Activated naive CD4-positive, alpha-beta T cell treated with anti-CD3 and anti-CD28 coated beads for 36 hours (primary cell): ENCODE measurements at regions of chr2 and their contacts with region 1.

Region 1: DNA sequence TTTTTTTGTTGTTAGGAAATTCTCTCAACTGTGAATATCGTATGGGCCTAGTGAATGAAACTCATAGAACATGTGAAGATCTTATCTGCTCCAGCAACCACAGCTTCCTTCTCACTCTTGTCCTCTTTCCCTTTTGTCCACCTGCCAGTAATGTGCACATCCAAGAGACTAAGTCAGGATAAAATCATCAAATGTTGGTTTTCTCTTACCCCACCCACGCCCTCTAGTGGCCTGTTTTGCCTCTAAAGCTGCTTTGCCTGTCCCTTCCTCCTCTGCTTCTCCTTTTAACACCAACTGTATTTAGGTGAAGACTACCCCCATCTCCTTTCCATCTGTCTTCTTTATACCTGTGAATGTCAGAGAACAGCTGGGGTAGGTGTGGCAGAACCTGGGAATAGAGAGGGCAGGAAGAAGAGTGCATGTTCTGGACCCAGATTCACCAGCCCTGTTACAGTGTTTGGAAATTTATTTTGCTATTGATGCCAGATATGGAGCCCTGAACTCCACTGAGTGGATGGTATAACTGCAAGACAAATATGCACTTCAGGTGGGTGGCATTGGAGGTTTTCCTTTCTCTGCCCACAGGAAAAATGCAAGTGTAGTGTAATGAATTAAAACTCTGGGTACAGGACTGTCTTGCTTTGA is 8.4 kb upstream of the MGAT5 start:
- DNase-seq: peak; percentile 90
- H3K4me3 Mint-ChIP-seq: no peak overlapping the region
- H3K27ac Mint-ChIP-seq: no peak overlapping the region
- H3K4me1 Mint-ChIP-seq: peaks cover 68% of the 10 kb centered on the region
- H3K27me3 Mint-ChIP-seq: no peaks in the 10 kb centered on the region

Region 2: GRCh38 chr2:133753665-133754064 is 491.8 kb before region 1 on chr2:
- CTCF ChIA-PET with region 1: no interaction called
- intact Hi-C with region 1: no loop called
- DNase-seq: no peak
- H3K4me3 Mint-ChIP-seq: no peak overlapping the region
- H3K27ac Mint-ChIP-seq: no peak overlapping the region
- H3K4me1 Mint-ChIP-seq: no peaks in the 10 kb centered on the region
- H3K27me3 Mint-ChIP-seq: peaks cover 7% of the 10 kb centered on the region

Region 3: GRCh38 chr2:133886735-133887660 is 358.5 kb before region 1 on chr2:
- CTCF ChIA-PET with region 1: no interaction called
- intact Hi-C with region 1: loop called (anchors 2 kb)
- DNase-seq: peak; percentile 66
- H3K4me3 Mint-ChIP-seq: no peak overlapping the region
- H3K27ac Mint-ChIP-seq: no peak overlapping the region
- H3K4me1 Mint-ChIP-seq: no peaks in the 10 kb centered on the region
- H3K27me3 Mint-ChIP-seq: peaks cover 5% of the 10 kb centered on the region

Region 4: GRCh38 chr2:134127496-134127895 is 118.0 kb before region 1 on chr2:
- CTCF ChIA-PET with region 1: interaction called, 11 read pairs
- intact Hi-C with region 1: no loop called
- DNase-seq: peak; percentile 84
- H3K4me3 Mint-ChIP-seq: no peak overlapping the region
- H3K27ac Mint-ChIP-seq: no peak overlapping the region
- H3K4me1 Mint-ChIP-seq: peaks cover 61% of the 10 kb centered on the region
- H3K27me3 Mint-ChIP-seq: no peaks in the 10 kb centered on the region

Region 5: DNA sequence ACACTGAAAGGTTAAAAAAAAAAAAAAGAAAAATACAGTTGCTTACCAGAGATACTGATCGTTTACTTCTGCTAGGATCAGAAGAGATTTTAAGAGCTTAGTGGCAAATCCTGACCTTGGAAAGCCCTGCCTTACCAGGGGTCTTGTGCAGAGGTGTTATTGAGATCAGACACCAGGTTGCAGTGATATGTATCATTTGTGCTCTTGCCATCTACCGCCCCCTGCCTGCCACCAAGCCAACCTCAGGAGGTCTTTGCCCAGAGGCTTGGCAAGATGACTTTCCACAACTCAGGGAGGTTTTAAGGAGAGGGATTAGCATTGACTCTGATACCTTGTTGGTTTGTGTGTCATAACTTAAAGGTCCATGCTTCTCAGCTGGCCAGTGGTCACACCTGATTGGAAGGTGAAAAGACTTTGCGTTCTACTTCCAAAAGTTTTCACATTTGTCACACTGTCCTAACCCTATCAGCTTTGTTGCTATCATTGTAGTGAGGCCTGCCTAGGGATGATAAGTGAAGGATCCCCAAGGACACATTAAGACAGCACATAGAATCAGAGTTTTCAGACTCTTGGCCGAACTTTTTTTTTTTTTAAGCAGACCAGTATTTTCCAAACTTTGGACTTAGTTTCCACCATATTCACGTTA is 37.8 kb before region 1 on chr2:
- CTCF ChIA-PET with region 1: interaction called, 22 read pairs
- intact Hi-C with region 1: no loop called
- DNase-seq: peak; percentile 81
- H3K4me3 Mint-ChIP-seq: no peak overlapping the region
- H3K27ac Mint-ChIP-seq: no peak overlapping the region
- H3K4me1 Mint-ChIP-seq: peaks cover 5% of the 10 kb centered on the region
- H3K27me3 Mint-ChIP-seq: no peaks in the 10 kb centered on the region

Region 6: GRCh38 chr2:134261398-134262131 is 16.1 kb after region 1 on chr2:
- CTCF ChIA-PET with region 1: interaction called, 14 read pairs
- intact Hi-C with region 1: loop called (anchors 1 kb)
- DNase-seq: peak; percentile 43
- H3K4me3 Mint-ChIP-seq: no peak overlapping the region
- H3K27ac Mint-ChIP-seq: no peak overlapping the region
- H3K4me1 Mint-ChIP-seq: peaks cover 66% of the 10 kb centered on the region
- H3K27me3 Mint-ChIP-seq: no peaks in the 10 kb centered on the region

Region 7: GRCh38 chr2:134411828-134412638 is 166.6 kb after region 1 on chr2:
- CTCF ChIA-PET with region 1: interaction called, 17 read pairs
- intact Hi-C with region 1: loop called (anchors 1 kb)
- DNase-seq: peak; percentile 83
- H3K4me3 Mint-ChIP-seq: no peak overlapping the region
- H3K27ac Mint-ChIP-seq: no peak overlapping the region
- H3K4me1 Mint-ChIP-seq: peaks cover 18% of the 10 kb centered on the region
- H3K27me3 Mint-ChIP-seq: no peaks in the 10 kb centered on the region